Dendritic cell treated with granulocyte-macrophage colony-stimulating factor and Interleukin-4, amounts not matched to agents 40 ng/mL and 50 ng/mL, for 4 days (primary cell): ENCODE measurements at regions of chr5 and their contacts with region 1.

Region 1: GRCh38 chr5:75511435-75512384 is at the starts of genes CERT1 and POLK:
- H3K4me3 Mint-ChIP-seq: peak within 1 kb of the TSS; percentile 99
- H3K27ac Mint-ChIP-seq: peak within 1 kb of the TSS; percentile 98
- H3K4me1 Mint-ChIP-seq: peaks cover 40% of the 10 kb centered on the region
- H3K27me3 Mint-ChIP-seq: no peaks in the 10 kb centered on the region

Region 2: DNA sequence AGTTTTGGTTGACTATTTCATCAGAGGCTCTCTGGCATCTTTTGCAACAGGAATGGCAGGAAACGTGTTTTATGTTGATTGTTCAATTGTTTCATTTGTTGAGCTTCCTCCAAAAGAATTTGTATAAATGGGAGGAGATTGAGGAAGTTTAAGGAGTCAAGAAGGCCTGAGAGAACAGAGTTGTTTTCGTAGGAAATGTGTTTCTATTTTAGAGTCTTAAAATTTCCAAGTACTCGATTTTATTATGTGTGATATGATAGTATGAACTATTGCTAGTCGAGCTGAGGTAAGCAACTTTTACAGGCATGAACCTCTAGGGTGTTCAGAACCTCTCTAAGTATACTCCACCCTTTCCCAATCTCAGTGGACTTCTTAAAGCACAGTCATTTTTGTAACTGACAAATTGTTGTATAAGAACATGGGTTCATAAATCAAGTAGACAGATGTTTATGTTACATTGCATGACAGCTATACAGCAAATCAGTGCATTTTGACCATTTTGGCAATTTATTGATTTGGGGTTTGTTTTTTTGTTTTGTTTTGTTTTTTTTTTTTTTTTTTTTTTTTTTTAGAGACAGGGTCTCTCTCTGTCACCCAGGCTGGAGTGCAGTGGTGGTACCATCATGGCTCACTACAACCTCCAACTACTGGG is 47.4 kb after region 1 on chr5:
- intact Hi-C with region 1: loop called (anchors 5 kb)
- H3K4me3 Mint-ChIP-seq: peak overlapping the region; percentile 46
- H3K27ac Mint-ChIP-seq: peak overlapping the region; percentile 73
- H3K4me1 Mint-ChIP-seq: peaks cover 31% of the 10 kb centered on the region
- H3K27me3 Mint-ChIP-seq: no peaks in the 10 kb centered on the region

Region 3: DNA sequence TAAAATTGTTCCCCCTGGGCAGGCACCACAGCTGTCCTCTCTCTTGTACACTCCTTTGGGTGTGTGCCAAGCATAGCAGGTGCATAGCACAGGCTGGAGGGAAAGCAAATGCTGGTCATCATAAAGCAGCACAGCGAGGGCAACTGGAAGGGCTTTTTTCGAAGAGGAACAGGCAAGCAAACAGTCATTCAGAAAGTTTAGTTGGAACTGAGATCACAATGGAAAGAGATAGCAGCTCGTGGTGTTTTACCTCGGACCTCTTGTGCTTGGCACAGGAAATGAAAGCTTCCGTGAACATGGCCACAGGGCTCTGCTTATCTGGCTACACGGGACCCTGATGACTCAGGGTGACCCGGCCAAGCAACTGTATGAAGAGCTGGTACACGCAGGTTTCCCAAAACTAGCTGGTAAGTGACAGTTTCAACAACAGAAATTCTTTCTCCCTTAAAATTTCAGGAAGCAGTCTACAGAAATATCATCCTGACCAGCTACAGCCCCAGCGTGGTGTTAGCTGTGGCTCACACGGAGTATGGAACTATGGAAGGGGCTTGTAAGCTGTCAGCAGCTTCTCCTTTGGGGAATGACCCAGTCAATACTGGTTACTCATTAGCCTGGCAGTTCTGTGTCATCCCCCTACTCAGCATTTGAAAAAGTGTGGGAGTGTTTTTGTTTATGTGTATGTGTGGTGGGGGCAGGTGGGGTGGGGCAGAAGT is 157.4 kb after region 1 on chr5:
- intact Hi-C with region 1: loop called (anchors 5 kb)
- H3K4me3 Mint-ChIP-seq: peak overlapping the region; percentile 72
- H3K27ac Mint-ChIP-seq: peak overlapping the region; percentile 96
- H3K4me1 Mint-ChIP-seq: peaks cover 39% of the 10 kb centered on the region
- H3K27me3 Mint-ChIP-seq: no peaks in the 10 kb centered on the region

Region 4: GRCh38 chr5:75717082-75717922 is 205.6 kb after region 1 on chr5 and contains the start of gene POC5:
- intact Hi-C with region 1: loop called (anchors 1 kb)
- H3K4me3 Mint-ChIP-seq: peak within 1 kb of the TSS; percentile 94
- H3K27ac Mint-ChIP-seq: peak within 1 kb of the TSS; percentile 96
- H3K4me1 Mint-ChIP-seq: peaks cover 38% of the 10 kb centered on the region
- H3K27me3 Mint-ChIP-seq: no peaks in the 10 kb centered on the region